Esophagus squamous epithelium (tissue), 5 donors: ENCODE measurements at regions of chr15 and their contacts with region 1.

Region 1: DNA sequence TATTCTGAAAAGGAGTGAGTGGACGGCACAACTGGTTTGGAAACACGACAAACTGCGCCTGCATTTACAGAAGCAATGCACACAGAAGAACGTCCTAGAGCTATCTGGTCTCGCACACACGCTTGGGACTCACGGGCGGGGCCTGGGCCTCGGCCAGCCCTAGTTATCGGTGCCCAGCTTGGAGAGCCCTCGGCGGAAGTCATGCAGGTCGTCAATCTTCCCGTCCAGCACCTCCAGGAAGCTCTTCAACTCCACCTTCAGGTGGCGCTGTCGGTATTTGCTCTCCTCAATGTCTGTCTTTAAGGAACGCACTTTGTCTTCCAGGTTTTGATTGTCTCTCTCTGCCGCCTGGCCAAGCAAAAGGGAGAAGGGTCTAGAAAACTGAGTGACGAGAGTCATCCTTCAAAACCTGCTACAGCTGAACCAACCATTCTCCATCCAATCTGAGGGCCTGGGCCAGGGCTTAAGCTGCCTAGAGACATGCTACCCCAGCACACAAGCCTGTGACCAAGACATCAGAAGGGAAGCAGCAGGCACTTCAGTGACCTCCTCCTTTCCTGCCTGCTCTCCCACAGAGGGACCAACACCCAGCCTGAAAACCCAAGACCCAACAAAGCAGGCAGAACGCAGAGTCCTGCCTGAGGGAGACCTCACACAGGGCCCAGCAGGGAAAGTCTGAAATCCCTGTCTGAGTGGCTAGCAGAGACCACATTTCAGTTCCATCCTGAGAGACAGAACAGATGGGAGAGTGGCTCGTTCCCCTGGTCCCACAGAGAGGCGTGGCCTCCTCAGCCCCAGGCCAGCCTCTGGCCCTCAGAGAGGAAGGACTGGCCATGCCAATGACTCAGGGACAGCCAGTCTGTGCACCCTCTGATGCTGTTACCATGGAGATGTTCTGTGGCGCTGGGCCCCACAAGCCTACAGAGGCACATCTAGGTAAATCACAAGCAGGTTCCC is 40.4 kb downstream of the WHAMM start:
- DNase-seq: no peak
- H3K4me3 ChIP-seq: peak overlapping the region in 1 of 4 donors; percentile 41
- H3K27ac ChIP-seq: peak overlapping the region in 3 of 4 donors; percentile 11 to 39 (median 24)
- H3K4me1 ChIP-seq: peaks cover 0 to 22% (median 7%) of the 10 kb centered on the region in 3 donors
- H3K27me3 ChIP-seq: no peaks in the 10 kb centered on the region
- CTCF ChIP-seq: peak; percentile 18 to 87 (median 68)
- POLR2A ChIP-seq: no peak

Region 2: DNA sequence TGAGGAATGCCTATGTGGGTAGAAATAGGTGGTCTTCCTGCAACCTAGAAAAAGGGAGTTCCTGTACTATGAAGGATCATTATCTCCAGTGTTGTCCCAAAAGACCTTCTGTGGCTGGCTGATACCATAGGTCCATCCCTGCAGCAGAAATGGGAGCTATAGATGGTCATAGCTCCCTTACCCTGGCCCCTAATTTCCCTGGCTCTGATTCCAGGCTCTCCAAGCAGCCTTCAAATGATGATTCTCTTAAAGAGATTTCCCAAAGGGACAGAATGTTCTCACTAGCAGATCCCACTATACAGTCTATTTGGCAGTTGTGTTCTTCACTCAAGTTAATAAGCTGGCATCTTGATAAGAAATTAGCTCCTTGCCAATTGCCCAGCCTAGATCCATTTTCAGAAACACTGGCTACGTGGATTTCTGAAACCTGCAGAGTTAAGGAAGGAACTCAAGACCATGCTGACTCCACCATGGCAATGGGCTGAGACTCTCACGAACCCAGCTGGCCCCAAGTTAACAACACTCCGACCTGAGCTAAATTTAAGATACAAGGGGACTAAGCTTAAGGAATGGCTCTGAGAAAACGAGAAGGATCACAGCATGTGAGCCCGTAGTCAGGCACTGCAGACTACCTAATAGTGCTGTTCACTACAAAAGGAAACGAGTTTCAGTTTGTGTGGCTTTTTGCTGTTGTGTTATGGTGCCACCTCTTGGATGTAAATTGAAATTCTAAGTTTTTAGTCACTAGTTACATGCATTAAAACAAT is 150.3 kb after region 1 on chr15:
- intact Hi-C with region 1: loop called (anchors 5 kb)
- DNase-seq: no peak
- H3K4me3 ChIP-seq: peak overlapping the region in 3 of 4 donors; percentile 15 to 59 (median 26)
- H3K27ac ChIP-seq: no peak overlapping the region
- H3K4me1 ChIP-seq: peaks cover 0 to 6% (median 5%) of the 10 kb centered on the region in 3 donors
- H3K27me3 ChIP-seq: no peaks in the 10 kb centered on the region
- CTCF ChIP-seq: peak; percentile 12 to 73 (median 50)
- POLR2A ChIP-seq: no peak